MCF 10A (cell line): ENCODE measurements at regions of chr12 and their contacts with region 1.

Region 1: GRCh38 chr12:55926738-55927587 is 731 bp downstream of the PYM1 start:
- DNase-seq: peak; percentile 91
- H3K4me3 Mint-ChIP-seq: peak overlapping the region; percentile 95
- H3K27ac Mint-ChIP-seq: peak overlapping the region; percentile 93
- H3K4me1 Mint-ChIP-seq: peaks cover 38% of the 10 kb centered on the region
- H3K27me3 Mint-ChIP-seq: no peaks in the 10 kb centered on the region
- CTCF ChIP-seq: peak; percentile 85

Region 2: GRCh38 chr12:55829967-55830600 is 96.9 kb before region 1 on chr12:
- CTCF ChIA-PET with region 1: interaction called, 12 read pairs
- POLR2A ChIA-PET with region 1: interaction called, 55 read pairs
- intact Hi-C with region 1: loop called (anchors 1 kb)
- DNase-seq: peak; percentile 13
- H3K4me3 Mint-ChIP-seq: peak overlapping the region; percentile 97
- H3K27ac Mint-ChIP-seq: peak overlapping the region; percentile 92
- H3K4me1 Mint-ChIP-seq: peaks cover 28% of the 10 kb centered on the region
- H3K27me3 Mint-ChIP-seq: no peaks in the 10 kb centered on the region
- CTCF ChIP-seq: no peak

Region 3: GRCh38 chr12:55875704-55876467 is 51.1 kb before region 1 on chr12:
- CTCF ChIA-PET with region 1: interaction called, 6 read pairs
- POLR2A ChIA-PET with region 1: interaction called, 7 read pairs
- intact Hi-C with region 1: loop called (anchors 1 kb)
- DNase-seq: no peak
- H3K4me3 Mint-ChIP-seq: no peak overlapping the region
- H3K27ac Mint-ChIP-seq: no peak overlapping the region
- H3K4me1 Mint-ChIP-seq: peaks cover 5% of the 10 kb centered on the region
- H3K27me3 Mint-ChIP-seq: no peaks in the 10 kb centered on the region
- CTCF ChIP-seq: no peak

Region 4: GRCh38 chr12:55940065-55940732 is 13.2 kb after region 1 on chr12:
- CTCF ChIA-PET with region 1: interaction called, 108 read pairs
- POLR2A ChIA-PET with region 1: interaction called, 53 read pairs
- intact Hi-C with region 1: loop called (anchors 1 kb)
- DNase-seq: peak; percentile 91
- H3K4me3 Mint-ChIP-seq: peak overlapping the region; percentile 48
- H3K27ac Mint-ChIP-seq: peak overlapping the region; percentile 52
- H3K4me1 Mint-ChIP-seq: peaks cover 49% of the 10 kb centered on the region
- H3K27me3 Mint-ChIP-seq: no peaks in the 10 kb centered on the region
- CTCF ChIP-seq: peak; percentile 85

Region 5: GRCh38 chr12:55973598-55974307 is 46.8 kb after region 1 on chr12 and contains the start of gene RAB5B:
- CTCF ChIA-PET with region 1: interaction called, 4 read pairs
- POLR2A ChIA-PET with region 1: interaction called, 140 read pairs
- intact Hi-C with region 1: loop called (anchors 2 kb)
- DNase-seq: peak; percentile 100
- H3K4me3 Mint-ChIP-seq: no peak within 1 kb of the TSS
- H3K27ac Mint-ChIP-seq: no peak within 1 kb of the TSS
- H3K4me1 Mint-ChIP-seq: peaks cover 25% of the 10 kb centered on the region
- H3K27me3 Mint-ChIP-seq: no peaks in the 10 kb centered on the region
- CTCF ChIP-seq: no peak
- total RNA-seq, gene RAB5B: 67.4 and 96.1 TPM in 2 replicates